ENCODE measurements at regions of chr1 and their contacts with region 1.

Region 1: GRCh38 chr1:66282343-66282852 is 251.6 kb upstream of the SGIP1 start:
- DNase-seq: no peak
- ATAC-seq: peak; percentile 82
- H3K4me3 Mint-ChIP-seq: peak overlapping the region; percentile 75
- H3K27ac Mint-ChIP-seq: peak overlapping the region; percentile 98
- H3K4me1 Mint-ChIP-seq: peaks cover 91% of the 10 kb centered on the region
- H3K27me3 Mint-ChIP-seq: no peaks in the 10 kb centered on the region
- CTCF ChIP-seq: no peak

Region 2: GRCh38 chr1:64966158-64966971 is 1316.0 kb before region 1 on chr1 and contains the start of gene JAK1:
- CTCF ChIA-PET with region 1: no interaction called
- POLR2A ChIA-PET with region 1: no interaction called
- intact Hi-C with region 1: loop called (anchors 10 kb)
- DNase-seq: peak; percentile 84
- ATAC-seq: peak; percentile 85
- H3K4me3 Mint-ChIP-seq: peak within 1 kb of the TSS; percentile 93
- H3K27ac Mint-ChIP-seq: peak within 1 kb of the TSS; percentile 92
- H3K4me1 Mint-ChIP-seq: peaks cover 49% of the 10 kb centered on the region
- H3K27me3 Mint-ChIP-seq: no peaks in the 10 kb centered on the region
- CTCF ChIP-seq: no peak
- total RNA-seq, gene JAK1: 195 and 215 TPM in 2 replicates

Region 3: GRCh38 chr1:65939191-65939590 is 343.2 kb before region 1 on chr1:
- CTCF ChIA-PET with region 1: no interaction called
- POLR2A ChIA-PET with region 1: no interaction called
- intact Hi-C with region 1: no loop called
- DNase-seq: no peak
- ATAC-seq: no peak
- H3K4me3 Mint-ChIP-seq: no peak overlapping the region
- H3K27ac Mint-ChIP-seq: no peak overlapping the region
- H3K4me1 Mint-ChIP-seq: no peaks in the 10 kb centered on the region
- H3K27me3 Mint-ChIP-seq: no peaks in the 10 kb centered on the region
- CTCF ChIP-seq: no peak

Region 4: DNA sequence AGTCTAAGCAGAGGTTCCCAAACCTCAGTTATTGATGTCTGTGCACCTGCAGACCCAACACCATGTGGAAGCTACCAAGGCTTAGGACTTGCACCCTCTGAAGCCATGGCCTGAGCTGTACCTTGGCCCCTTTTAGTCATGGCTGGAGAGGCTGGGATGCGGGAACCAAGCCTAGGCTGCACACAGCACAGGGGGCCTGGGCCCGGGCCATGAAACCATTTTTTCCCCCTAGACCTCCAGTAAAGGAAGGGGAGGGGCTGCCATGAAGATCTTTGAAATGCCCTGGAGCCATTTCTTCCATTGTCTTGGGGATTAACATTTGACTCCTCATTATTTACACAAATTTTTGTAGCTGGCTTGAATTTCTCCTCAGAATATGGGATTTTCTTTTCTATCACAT is 223.8 kb before region 1 on chr1:
- CTCF ChIA-PET with region 1: no interaction called
- POLR2A ChIA-PET with region 1: no interaction called
- intact Hi-C with region 1: no loop called
- DNase-seq: no peak
- ATAC-seq: no peak
- H3K4me3 Mint-ChIP-seq: no peak overlapping the region
- H3K27ac Mint-ChIP-seq: no peak overlapping the region
- H3K4me1 Mint-ChIP-seq: no peaks in the 10 kb centered on the region
- H3K27me3 Mint-ChIP-seq: no peaks in the 10 kb centered on the region
- CTCF ChIP-seq: no peak

Region 5: DNA sequence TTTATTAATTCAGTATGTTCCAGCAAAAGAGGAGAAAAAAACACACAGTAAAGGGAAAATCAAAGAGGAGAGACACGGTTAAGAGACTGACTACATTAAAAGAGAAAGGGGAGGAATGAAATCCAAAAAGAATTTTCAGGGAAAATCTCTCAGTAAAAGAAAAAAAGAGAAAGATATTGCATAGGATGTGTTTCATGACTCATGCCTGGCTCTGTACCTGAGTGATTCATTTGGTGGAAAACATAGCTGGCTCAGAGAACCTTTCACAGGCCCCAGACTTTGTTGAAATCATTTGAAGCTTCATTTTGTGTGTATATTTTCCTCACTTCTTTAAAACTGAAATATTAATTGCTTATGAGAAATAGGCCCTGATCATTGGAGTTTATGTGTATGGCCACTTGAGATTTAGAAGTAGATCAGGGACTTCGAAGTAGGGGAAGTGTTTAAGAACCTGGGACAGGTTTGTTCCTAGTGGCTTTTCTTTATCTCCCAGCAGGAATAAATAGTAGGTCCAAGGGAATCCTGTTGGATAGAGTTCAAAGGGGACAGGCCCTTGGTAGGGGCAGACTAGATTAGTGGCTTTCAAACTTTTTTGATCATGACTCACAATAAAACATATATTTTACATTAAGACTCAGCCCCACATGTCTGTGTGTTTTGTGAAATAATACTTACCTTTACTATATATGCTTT is 12.4 kb after region 1 on chr1:
- CTCF ChIA-PET with region 1: interaction called, 7 read pairs
- POLR2A ChIA-PET with region 1: interaction called, 12 read pairs
- intact Hi-C with region 1: no loop called
- DNase-seq: no peak
- ATAC-seq: no peak
- H3K4me3 Mint-ChIP-seq: no peak overlapping the region
- H3K27ac Mint-ChIP-seq: no peak overlapping the region
- H3K4me1 Mint-ChIP-seq: peaks cover 51% of the 10 kb centered on the region
- H3K27me3 Mint-ChIP-seq: no peaks in the 10 kb centered on the region
- CTCF ChIP-seq: no peak

Region 6: DNA sequence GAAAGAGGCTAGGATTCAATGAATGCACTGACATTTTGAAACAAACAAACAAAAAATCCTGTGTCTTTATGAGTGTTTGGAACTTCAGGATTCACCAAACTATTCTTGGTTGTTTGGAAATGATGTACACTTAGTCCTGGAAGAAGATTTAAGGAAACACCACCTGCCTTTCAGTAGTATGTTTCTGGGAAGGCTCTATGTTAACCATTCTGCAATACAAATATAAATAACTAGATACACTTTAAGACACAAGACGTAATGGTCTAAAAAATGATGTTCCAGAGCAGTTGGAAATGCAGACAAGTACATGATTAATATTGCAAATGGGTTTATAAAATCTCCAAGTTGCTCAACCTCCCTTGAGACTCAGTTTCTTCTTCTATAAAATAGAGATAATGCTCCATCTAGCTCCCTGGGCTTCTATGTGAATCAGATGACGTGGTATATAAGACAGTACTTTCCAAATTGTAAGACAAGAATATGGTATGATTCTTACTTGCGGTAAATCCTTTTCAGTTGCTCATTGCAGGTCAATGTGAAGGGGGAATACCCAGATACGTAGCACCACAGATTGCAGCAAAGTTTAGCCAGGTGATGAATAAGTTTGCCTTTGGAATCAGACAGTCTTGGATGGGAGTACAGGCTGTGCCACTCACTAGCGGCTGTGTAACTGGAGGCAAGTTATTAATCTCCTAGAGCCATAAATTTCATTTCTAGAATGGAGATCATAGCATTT is 26.8 kb after region 1 on chr1:
- CTCF ChIA-PET with region 1: no interaction called
- POLR2A ChIA-PET with region 1: no interaction called
- intact Hi-C with region 1: no loop called
- DNase-seq: no peak
- ATAC-seq: no peak
- H3K4me3 Mint-ChIP-seq: no peak overlapping the region
- H3K27ac Mint-ChIP-seq: no peak overlapping the region
- H3K4me1 Mint-ChIP-seq: no peaks in the 10 kb centered on the region
- H3K27me3 Mint-ChIP-seq: no peaks in the 10 kb centered on the region
- CTCF ChIP-seq: no peak

Region 7: DNA sequence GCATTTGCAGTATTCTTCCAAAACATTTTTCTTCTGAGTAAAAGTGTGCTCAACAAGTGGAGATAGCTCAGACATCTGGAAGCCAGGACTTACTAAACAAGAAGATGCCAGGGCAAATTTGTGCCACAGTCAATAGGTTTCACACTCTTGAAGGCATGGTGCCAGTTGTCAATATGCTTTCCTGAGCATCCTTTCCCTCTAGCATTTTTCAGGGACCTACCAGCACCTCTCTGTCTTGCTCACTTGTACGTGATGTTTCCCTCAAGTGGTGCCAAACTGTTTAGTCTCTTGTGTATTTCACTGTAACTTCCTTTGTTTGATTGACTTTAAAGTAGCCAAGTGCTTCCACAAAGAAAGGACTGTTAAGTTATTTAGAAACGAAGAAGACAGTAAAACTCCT is 57.5 kb after region 1 on chr1:
- CTCF ChIA-PET with region 1: interaction called, 17 read pairs
- POLR2A ChIA-PET with region 1: interaction called, 226 read pairs
- intact Hi-C with region 1: loop called (anchors 1 kb)
- DNase-seq: no peak
- ATAC-seq: no peak
- H3K4me3 Mint-ChIP-seq: peak overlapping the region; percentile 64
- H3K27ac Mint-ChIP-seq: peak overlapping the region; percentile 83
- H3K4me1 Mint-ChIP-seq: peaks cover 86% of the 10 kb centered on the region
- H3K27me3 Mint-ChIP-seq: no peaks in the 10 kb centered on the region
- CTCF ChIP-seq: no peak

Region 8: DNA sequence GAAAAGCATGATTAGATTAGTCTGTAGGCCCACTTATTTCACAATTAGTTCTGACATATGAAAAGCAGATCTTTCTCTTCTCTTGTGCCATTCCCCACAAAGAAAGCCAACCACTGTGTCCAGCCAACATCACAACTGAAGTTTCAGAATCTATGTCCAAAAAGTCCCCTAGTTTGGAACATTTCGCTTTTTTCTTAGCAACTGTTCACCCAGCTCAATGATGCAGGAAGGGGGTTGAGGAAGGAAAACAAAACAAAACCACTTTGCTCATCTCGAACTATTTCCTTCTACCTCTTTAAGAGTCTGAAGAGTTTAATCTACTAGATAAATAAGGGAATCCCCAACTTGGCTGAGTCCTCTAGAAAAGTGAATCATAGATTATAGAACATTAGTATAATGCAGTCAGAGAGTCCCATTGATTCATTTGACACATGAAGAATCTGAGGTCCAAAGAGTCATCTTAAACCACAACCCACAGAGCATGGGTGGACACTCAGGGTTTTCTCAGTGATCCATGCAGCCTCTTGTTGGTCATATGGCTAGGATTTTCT is 92.2 kb after region 1 on chr1:
- CTCF ChIA-PET with region 1: interaction called, 6 read pairs
- POLR2A ChIA-PET with region 1: interaction called, 37 read pairs
- intact Hi-C with region 1: loop called (anchors 1 kb)
- DNase-seq: no peak
- ATAC-seq: peak; percentile 79
- H3K4me3 Mint-ChIP-seq: peak overlapping the region; percentile 39
- H3K27ac Mint-ChIP-seq: peak overlapping the region; percentile 93
- H3K4me1 Mint-ChIP-seq: peaks cover 94% of the 10 kb centered on the region
- H3K27me3 Mint-ChIP-seq: no peaks in the 10 kb centered on the region
- CTCF ChIP-seq: no peak

Region 9: GRCh38 chr1:66396212-66396890 is 114.0 kb after region 1 on chr1:
- CTCF ChIA-PET with region 1: interaction called, 4 read pairs
- POLR2A ChIA-PET with region 1: interaction called, 32 read pairs
- intact Hi-C with region 1: no loop called
- DNase-seq: no peak
- ATAC-seq: peak; percentile 71
- H3K4me3 Mint-ChIP-seq: peak overlapping the region; percentile 48
- H3K27ac Mint-ChIP-seq: peak overlapping the region; percentile 74
- H3K4me1 Mint-ChIP-seq: peaks cover 81% of the 10 kb centered on the region
- H3K27me3 Mint-ChIP-seq: no peaks in the 10 kb centered on the region
- CTCF ChIP-seq: no peak

Region 10: DNA sequence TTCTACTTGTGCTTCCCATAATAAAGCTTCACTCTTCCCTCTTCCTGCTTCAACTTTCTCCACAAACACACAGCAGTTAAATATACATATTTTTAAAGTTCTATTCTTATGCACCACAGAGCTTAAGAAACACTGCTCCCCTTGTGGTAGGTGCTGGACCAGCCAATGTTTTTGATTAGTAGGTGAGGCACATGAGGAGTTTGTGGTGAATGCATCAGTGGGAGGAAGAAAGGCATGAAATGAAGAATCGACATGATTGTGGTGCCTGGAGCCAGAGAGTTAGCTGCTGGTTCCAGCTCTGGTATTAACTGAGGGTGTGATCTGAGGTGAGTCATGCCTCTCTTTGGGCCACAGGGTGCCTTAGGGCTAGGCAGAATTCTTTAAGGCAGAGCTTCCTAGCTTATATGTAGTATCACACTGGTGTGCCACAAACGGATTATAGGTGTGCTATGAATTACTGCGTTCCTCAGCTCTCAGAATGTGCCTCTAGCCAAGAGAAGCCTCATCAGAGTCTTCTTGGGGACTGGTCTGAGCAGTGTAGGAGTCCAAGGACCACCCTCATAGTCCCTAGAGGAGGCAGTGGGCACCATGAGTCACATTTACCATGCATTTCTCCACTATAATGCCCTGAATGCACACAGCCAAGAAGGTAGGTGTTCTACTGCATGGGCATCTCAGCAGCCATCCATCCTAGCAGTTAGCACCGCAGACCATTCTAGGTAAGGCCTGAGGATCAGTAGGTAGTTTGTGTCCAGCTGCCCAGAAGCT is 154.2 kb after region 1 on chr1:
- CTCF ChIA-PET with region 1: interaction called, 18 read pairs
- POLR2A ChIA-PET with region 1: interaction called, 4 read pairs
- intact Hi-C with region 1: loop called (anchors 1 kb)
- DNase-seq: no peak
- ATAC-seq: peak; percentile 65
- H3K4me3 Mint-ChIP-seq: no peak overlapping the region
- H3K27ac Mint-ChIP-seq: peak overlapping the region; percentile 63
- H3K4me1 Mint-ChIP-seq: peaks cover 38% of the 10 kb centered on the region
- H3K27me3 Mint-ChIP-seq: no peaks in the 10 kb centered on the region
- CTCF ChIP-seq: no peak

Region 11: GRCh38 chr1:66853379-66853778 is 571.0 kb after region 1 on chr1:
- CTCF ChIA-PET with region 1: no interaction called
- POLR2A ChIA-PET with region 1: no interaction called
- intact Hi-C with region 1: no loop called
- DNase-seq: no peak
- ATAC-seq: no peak
- H3K4me3 Mint-ChIP-seq: no peak overlapping the region
- H3K27ac Mint-ChIP-seq: no peak overlapping the region
- H3K4me1 Mint-ChIP-seq: peaks cover 2% of the 10 kb centered on the region
- H3K27me3 Mint-ChIP-seq: no peaks in the 10 kb centered on the region
- CTCF ChIP-seq: no peak